PC-3 (cell line): ENCODE measurements at regions of chr2 and their contacts with region 1.

Region 1: GRCh38 chr2:26292665-26293064 is 47.9 kb downstream of the HADHB start:
- DNase-seq: peak; percentile 77
- ATAC-seq: peak; percentile 96
- H3K4me3 ChIP-seq: no peak overlapping the region
- H3K27ac ChIP-seq: no peak overlapping the region
- H3K4me1 ChIP-seq: peaks cover 9% of the 10 kb centered on the region; the same call in 1 of the 2 replicates
- H3K27me3 ChIP-seq: no peaks in the 10 kb centered on the region
- CTCF ChIP-seq: no peak

Region 2: GRCh38 chr2:26255759-26256384 is 36.8 kb before region 1 on chr2:
- CTCF ChIA-PET with region 1: no interaction called
- POLR2A ChIA-PET with region 1: no interaction called
- intact Hi-C with region 1: loop called (anchors 5 kb)
- DNase-seq: peak; percentile 50
- ATAC-seq: peak; percentile 81
- H3K4me3 ChIP-seq: no peak overlapping the region
- H3K27ac ChIP-seq: 0 out of 2 replicates have a peak overlapping the region, but pooled peaks have one; percentile 9
- H3K4me1 ChIP-seq: peaks cover 11% of the 10 kb centered on the region; the same call in 1 of the 2 replicates
- H3K27me3 ChIP-seq: no peaks in the 10 kb centered on the region
- CTCF ChIP-seq: no peak